Panc1 (cell line): ENCODE measurements at regions of chr5 and their contacts with region 1.

Region 1: DNA sequence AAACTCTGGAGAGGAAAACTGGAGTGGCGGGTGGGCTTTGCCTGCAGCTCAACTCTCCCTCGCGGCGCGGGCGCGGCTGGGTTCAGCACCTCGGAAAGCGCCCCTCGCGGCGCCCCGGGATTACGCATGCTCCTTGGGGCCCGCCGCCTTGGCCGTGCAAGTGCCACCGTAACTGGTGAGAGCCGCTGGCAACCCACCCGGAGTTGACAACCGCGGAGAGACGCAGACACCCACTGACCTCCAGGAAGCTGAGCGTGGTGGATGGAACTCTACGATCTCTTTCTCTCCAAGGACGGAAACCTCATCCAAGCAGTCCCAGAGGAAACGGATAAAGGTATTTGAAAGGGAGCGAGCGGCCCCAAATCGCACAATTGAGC is 194 bp upstream of the RXFP3 start:
- DNase-seq: no peak
- ATAC-seq: no peak
- H3K4me3 ChIP-seq: no peak overlapping the region
- H3K27ac ChIP-seq: no peak overlapping the region
- H3K4me1 ChIP-seq: no peaks in the 10 kb centered on the region
- H3K27me3 ChIP-seq: peaks cover 15% of the 10 kb centered on the region
- CTCF ChIP-seq: no peak

Region 2: DNA sequence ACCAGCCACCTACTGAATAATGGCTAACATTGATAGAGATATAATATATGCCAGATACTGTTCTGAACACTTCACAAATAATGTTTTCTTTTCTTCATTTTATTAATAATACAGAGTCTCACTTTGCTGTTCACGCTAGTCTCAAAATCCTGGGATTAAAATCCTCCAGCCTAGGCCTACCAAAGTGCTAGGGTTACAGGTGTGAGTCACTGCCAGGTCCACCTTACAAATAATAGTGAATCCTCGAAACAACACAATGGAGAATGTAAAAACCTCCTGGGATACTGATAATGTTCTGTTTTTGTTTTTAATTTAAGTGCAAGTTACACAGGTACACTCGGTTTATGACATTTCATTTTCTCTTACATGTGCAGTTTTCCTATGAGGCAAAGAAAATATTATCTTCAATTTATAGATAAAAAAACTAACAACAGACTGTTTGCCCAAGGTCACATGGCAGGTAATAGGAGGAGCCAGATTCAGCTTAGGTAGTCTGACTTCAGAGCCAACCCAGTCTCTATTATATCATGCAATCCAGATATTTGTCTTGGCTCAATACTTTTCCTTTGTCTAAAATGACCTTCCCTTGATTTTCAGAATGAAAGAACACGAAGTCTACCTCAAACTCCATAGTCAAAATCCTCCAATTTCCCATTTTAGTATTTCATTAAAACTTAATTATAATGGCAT is 1499.3 kb before region 1 on chr5:
- CTCF ChIA-PET with region 1: no interaction called
- POLR2A ChIA-PET with region 1: no interaction called
- in situ Hi-C with region 1: no loop called
- intact Hi-C with region 1: no loop called
- DNase-seq: no peak
- ATAC-seq: no peak
- H3K4me3 ChIP-seq: no peak overlapping the region
- H3K27ac ChIP-seq: no peak overlapping the region
- H3K4me1 ChIP-seq: no peaks in the 10 kb centered on the region; the same call in 1 of the 2 replicates
- H3K27me3 ChIP-seq: no peaks in the 10 kb centered on the region
- CTCF ChIP-seq: no peak

Region 3: GRCh38 chr5:33439905-33440481 is 496.0 kb before region 1 on chr5:
- CTCF ChIA-PET with region 1: interaction called, 3 read pairs
- POLR2A ChIA-PET with region 1: interaction called, 6 read pairs
- in situ Hi-C with region 1: no loop called
- intact Hi-C with region 1: loop called (anchors 5 kb)
- DNase-seq: no peak
- ATAC-seq: peak; percentile 53
- H3K4me3 ChIP-seq: peak overlapping the region; percentile 96 to 99
- H3K27ac ChIP-seq: peak overlapping the region; percentile 99
- H3K4me1 ChIP-seq: peaks cover 13% of the 10 kb centered on the region; the same call in 1 of the 2 replicates
- H3K27me3 ChIP-seq: no peaks in the 10 kb centered on the region
- CTCF ChIP-seq: no peak

Region 4: DNA sequence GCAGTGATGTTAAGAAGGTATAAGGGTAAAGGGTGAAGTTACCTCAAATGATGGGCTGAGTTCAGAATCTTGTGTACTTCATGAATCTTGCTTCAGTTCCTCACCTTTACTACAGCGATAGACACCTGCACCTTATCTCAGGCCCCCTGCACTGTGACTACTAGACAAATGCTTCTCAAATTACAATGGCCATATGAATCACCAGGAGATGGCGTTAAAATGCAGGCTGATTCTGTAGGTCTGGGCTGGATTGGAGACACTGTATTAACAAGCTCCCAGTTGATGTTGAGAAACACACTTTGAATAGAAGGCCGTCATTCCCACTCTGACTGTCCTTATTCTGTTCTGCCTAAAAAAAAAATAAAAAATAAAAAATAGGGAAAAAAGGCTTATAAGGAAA is 465.4 kb before region 1 on chr5:
- CTCF ChIA-PET with region 1: interaction called, 3 read pairs
- POLR2A ChIA-PET with region 1: no interaction called
- in situ Hi-C with region 1: no loop called
- intact Hi-C with region 1: loop called (anchors 10 kb)
- DNase-seq: no peak
- ATAC-seq: peak; percentile 65; the same call in 1 of the 2 replicates
- H3K4me3 ChIP-seq: no peak overlapping the region
- H3K27ac ChIP-seq: no peak overlapping the region
- H3K4me1 ChIP-seq: no peaks in the 10 kb centered on the region
- H3K27me3 ChIP-seq: no peaks in the 10 kb centered on the region
- CTCF ChIP-seq: peak; percentile 45

Region 5: DNA sequence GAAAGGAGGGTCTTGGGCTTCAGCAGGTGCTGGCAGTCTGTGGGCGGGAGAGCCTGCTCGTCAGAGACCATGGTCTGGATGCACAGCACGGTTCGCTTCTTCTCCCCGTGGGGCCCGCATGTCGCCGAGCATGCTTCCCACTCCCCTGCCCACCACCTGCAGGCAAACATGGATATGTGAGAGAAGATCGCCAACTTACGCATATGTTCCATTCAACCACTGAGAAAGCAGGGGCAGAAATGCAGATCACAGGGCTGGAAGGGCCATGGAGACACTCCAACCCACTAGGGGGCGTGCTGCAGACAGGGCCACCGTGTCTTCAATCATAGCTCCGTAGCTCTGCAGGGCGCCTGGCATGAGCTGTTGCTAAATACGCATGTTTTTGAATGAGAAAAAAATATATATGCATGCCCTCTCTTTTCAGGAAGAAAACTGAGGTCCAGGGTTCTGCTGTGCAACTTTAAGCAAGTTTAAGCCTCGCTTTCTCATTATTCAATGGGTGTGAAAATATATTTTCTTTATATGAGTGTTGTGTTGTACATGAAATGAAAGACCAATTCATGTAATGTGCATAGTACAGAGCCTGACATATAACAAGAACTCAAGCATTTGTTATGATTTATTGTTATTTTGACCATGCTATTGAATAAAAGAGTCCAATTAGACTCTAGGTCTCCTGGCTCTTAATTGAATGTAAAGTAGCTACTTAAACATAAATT is 347.2 kb before region 1 on chr5:
- CTCF ChIA-PET with region 1: interaction called, 7 read pairs
- POLR2A ChIA-PET with region 1: no interaction called
- in situ Hi-C with region 1: no loop called
- intact Hi-C with region 1: loop called (anchors 10 kb)
- DNase-seq: no peak
- ATAC-seq: peak; percentile 82
- H3K4me3 ChIP-seq: no peak overlapping the region
- H3K27ac ChIP-seq: no peak overlapping the region
- H3K4me1 ChIP-seq: no peaks in the 10 kb centered on the region
- H3K27me3 ChIP-seq: no peaks in the 10 kb centered on the region; the same call in 1 of the 2 replicates
- CTCF ChIP-seq: peak; percentile 80

Region 6: DNA sequence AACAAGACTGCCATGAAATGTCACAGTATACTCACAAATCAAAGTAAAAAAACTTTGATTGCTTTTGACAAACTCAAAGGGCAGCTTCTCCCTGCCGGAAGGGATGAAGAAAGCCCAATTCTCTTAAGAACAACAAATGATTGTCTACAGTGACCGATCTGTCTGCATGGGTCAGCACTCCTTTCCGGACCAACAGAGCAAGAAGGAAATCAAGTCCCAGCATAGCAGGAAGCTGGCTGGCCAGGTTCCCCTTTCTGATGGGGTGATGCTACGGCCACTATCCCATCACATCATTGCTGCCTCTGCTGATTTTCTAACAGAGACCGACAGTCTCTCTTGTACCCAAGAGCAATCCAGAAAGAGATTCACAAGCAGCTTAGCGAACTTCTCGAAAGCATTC is 106.3 kb after region 1 on chr5:
- CTCF ChIA-PET with region 1: no interaction called
- POLR2A ChIA-PET with region 1: no interaction called
- in situ Hi-C with region 1: no loop called
- intact Hi-C with region 1: no loop called
- DNase-seq: no peak
- ATAC-seq: no peak
- H3K4me3 ChIP-seq: no peak overlapping the region
- H3K27ac ChIP-seq: no peak overlapping the region
- H3K4me1 ChIP-seq: no peaks in the 10 kb centered on the region
- H3K27me3 ChIP-seq: no peaks in the 10 kb centered on the region
- CTCF ChIP-seq: no peak